MCF 10A (cell line): ENCODE measurements at regions of chr3 and their contacts with region 1.

Region 1: DNA sequence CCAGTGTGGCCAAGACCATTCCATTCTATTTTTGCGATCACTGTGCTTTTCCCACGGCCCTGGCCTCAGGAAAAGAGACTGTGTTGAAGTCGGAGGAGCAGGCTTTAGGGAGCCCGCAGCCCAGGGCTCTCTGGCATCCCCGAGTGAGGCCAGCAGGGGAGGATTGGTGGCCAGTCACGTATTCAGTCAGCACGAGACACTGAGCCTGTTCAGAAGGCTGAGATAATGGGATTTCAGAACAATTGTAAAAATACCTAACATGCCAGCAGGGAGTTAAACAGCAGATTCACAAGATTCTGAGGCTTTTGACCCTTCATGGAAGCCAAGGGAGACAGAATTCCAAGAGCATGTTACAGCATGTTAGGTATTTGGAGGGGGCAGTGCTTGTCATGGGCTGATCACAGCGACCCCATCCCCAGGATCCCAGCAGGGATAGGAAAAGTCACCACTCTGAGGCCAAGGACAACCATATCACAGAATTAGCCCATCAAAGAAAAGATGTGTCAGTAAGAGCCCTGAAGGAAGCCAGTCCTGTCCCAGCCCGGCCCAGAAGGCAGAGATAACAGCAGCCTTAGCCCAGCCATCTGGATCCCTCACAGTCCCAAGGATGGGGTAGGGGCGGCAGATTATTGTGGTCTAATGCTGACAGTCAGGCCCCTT is 40.6 kb downstream of the AMOTL2 start:
- DNase-seq: no peak
- H3K4me3 Mint-ChIP-seq: no peak overlapping the region
- H3K27ac Mint-ChIP-seq: peak overlapping the region; percentile 84
- H3K4me1 Mint-ChIP-seq: peaks cover 83% of the 10 kb centered on the region
- H3K27me3 Mint-ChIP-seq: no peaks in the 10 kb centered on the region
- CTCF ChIP-seq: no peak

Region 2: GRCh38 chr3:133880287-133880686 is 453.4 kb before region 1 on chr3:
- CTCF ChIA-PET with region 1: no interaction called
- POLR2A ChIA-PET with region 1: no interaction called
- intact Hi-C with region 1: no loop called
- DNase-seq: no peak
- H3K4me3 Mint-ChIP-seq: no peak overlapping the region
- H3K27ac Mint-ChIP-seq: no peak overlapping the region
- H3K4me1 Mint-ChIP-seq: no peaks in the 10 kb centered on the region
- H3K27me3 Mint-ChIP-seq: peaks cover 44% of the 10 kb centered on the region
- CTCF ChIP-seq: no peak

Region 3: DNA sequence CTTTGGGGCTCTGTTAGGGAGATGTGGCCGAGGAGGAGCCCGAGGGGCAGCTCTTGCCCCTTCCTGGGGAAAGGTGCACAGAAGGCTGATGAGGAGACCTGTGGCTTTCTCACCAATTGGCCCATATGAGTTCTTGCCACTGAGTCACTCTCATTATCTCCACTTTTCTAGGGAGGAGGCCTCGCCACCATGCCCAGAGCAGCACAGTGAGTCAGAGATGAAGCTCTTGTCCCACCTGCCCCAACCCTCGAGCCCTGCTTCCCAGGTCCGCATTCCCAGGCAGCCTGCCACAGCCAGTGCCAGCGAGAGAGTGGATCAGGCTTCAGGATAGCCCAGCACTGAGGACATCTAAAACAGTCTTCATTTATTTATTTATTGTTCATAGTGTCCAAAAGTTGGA is 12.9 kb before region 1 on chr3:
- CTCF ChIA-PET with region 1: interaction called, 4 read pairs
- POLR2A ChIA-PET with region 1: interaction called, 15 read pairs
- intact Hi-C with region 1: no loop called
- DNase-seq: peak; percentile 84
- H3K4me3 Mint-ChIP-seq: no peak overlapping the region
- H3K27ac Mint-ChIP-seq: peak overlapping the region; percentile 66
- H3K4me1 Mint-ChIP-seq: peaks cover 43% of the 10 kb centered on the region
- H3K27me3 Mint-ChIP-seq: no peaks in the 10 kb centered on the region
- CTCF ChIP-seq: no peak

Region 4: GRCh38 chr3:134348524-134348923 is 14.9 kb after region 1 on chr3:
- CTCF ChIA-PET with region 1: interaction called, 6 read pairs
- POLR2A ChIA-PET with region 1: interaction called, 95 read pairs
- intact Hi-C with region 1: no loop called
- DNase-seq: peak; percentile 56
- H3K4me3 Mint-ChIP-seq: no peak overlapping the region
- H3K27ac Mint-ChIP-seq: peak overlapping the region; percentile 77
- H3K4me1 Mint-ChIP-seq: peaks cover 39% of the 10 kb centered on the region
- H3K27me3 Mint-ChIP-seq: no peaks in the 10 kb centered on the region
- CTCF ChIP-seq: no peak

Region 5: DNA sequence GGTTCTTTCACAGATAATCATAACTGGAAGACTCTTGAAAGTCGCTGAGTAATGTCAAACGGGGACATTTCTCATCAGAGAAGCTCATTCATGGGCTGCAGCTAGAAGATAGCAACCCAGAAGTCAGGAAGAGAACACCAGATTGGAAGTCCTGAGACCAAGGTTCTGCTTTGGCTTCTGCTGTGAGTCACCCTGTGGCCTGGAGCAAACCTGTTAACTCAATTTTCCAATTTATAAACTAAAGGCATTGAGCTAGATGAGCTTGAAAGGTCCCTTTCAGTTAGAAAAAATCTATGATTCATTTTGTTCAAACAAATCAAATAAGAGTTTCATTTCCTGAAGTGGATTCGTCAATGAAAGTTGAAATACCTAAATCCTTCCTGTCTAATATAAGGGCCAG is 863.6 kb after region 1 on chr3:
- CTCF ChIA-PET with region 1: no interaction called
- POLR2A ChIA-PET with region 1: no interaction called
- intact Hi-C with region 1: no loop called
- DNase-seq: no peak
- H3K4me3 Mint-ChIP-seq: no peak overlapping the region
- H3K27ac Mint-ChIP-seq: no peak overlapping the region
- H3K4me1 Mint-ChIP-seq: no peaks in the 10 kb centered on the region
- H3K27me3 Mint-ChIP-seq: no peaks in the 10 kb centered on the region
- CTCF ChIP-seq: no peak